T-cell (primary cell): ENCODE measurements at regions of chr19 and their contacts with region 1.

Region 1: DNA sequence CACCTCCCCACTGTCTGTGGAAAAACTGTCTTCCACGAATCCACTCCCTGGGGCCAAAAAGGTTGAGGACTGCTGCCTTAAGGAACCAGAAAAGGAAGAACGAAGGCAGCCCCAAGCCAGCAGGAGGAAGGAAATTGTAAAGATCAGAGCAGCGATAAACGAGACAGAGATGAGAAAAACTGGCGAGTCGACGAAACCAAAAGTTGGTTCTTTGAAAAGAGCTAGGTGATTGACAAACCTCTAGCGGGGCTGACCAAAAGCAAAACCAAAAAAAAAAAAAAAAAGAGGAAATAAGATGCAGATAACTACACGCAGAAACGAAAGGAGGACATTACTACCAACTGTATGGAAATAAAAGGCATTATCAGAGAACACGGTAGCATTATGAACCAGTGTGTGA is 76.9 kb downstream of the GADD45B start:
- DNase-seq: peak in 32 of 35 experiments; percentile 19 to 84 (median 44)
- ATAC-seq: peak; percentile 89 to 94 (median 91)
- H3K4me3 ChIP-seq: peak overlapping the region; percentile 29 to 37
- H3K4me3 Mint-ChIP-seq: peak overlapping the region; percentile 68 to 85 (median 73)
- H3K27ac ChIP-seq: peak overlapping the region; percentile 67
- H3K27ac Mint-ChIP-seq: peak overlapping the region; percentile 86 to 90
- H3K4me1 ChIP-seq: peaks cover 2 to 18% of the 10 kb centered on the region in 2 experiments
- H3K4me1 Mint-ChIP-seq: peaks cover 20 to 32% (median 21%) of the 10 kb centered on the region in 3 donors
- H3K27me3 ChIP-seq: no peaks in the 10 kb centered on the region
- H3K27me3 Mint-ChIP-seq: no peaks in the 10 kb centered on the region

Region 2: GRCh38 chr19:2610637-2611482 is 58.0 kb after region 1 on chr19:
- CTCF ChIA-PET with region 1: interaction called in 1 of 2 experiments, 10 read pairs
- POLR2A ChIA-PET with region 1: no interaction called
- DNase-seq: peak; percentile 49 to 93 (median 82)
- ATAC-seq: peak; percentile 63 to 76 (median 74)
- H3K4me3 ChIP-seq: peak overlapping the region; percentile 45 to 72
- H3K4me3 Mint-ChIP-seq: peak overlapping the region; percentile 72 to 80 (median 77)
- H3K27ac ChIP-seq: no peak overlapping the region
- H3K27ac Mint-ChIP-seq: peak overlapping the region in 1 of 2 donors; percentile 46
- H3K4me1 ChIP-seq: peaks cover 11 to 42% of the 10 kb centered on the region in 2 experiments
- H3K4me1 Mint-ChIP-seq: peaks cover 39 to 44% (median 40%) of the 10 kb centered on the region in 3 donors
- H3K27me3 ChIP-seq: peaks cover 0 to 9% of the 10 kb centered on the region in 2 experiments
- H3K27me3 Mint-ChIP-seq: peaks cover 0 to 3% of the 10 kb centered on the region in 2 donors

Region 3: GRCh38 chr19:2702162-2703076 is 149.6 kb after region 1 on chr19 and contains the start of gene GNG7:
- CTCF ChIA-PET with region 1: no interaction called
- POLR2A ChIA-PET with region 1: no interaction called
- DNase-seq: peak; percentile 86 to 99 (median 93)
- ATAC-seq: peak; percentile 99 to 100 (median 100)
- H3K4me3 ChIP-seq: peak within 1 kb of the TSS; percentile 6 to 45
- H3K4me3 Mint-ChIP-seq: peak within 1 kb of the TSS; percentile 67 to 78 (median 75)
- H3K27ac ChIP-seq: no peak within 1 kb of the TSS
- H3K27ac Mint-ChIP-seq: peak within 1 kb of the TSS in 1 of 2 donors; percentile 82
- H3K4me1 ChIP-seq: peaks cover 6 to 26% of the 10 kb centered on the region in 2 experiments
- H3K4me1 Mint-ChIP-seq: peaks cover 31 to 36% (median 35%) of the 10 kb centered on the region in 3 donors
- H3K27me3 ChIP-seq: peaks cover 0 to 3% of the 10 kb centered on the region in 2 experiments
- H3K27me3 Mint-ChIP-seq: no peaks in the 10 kb centered on the region
- total RNA-seq, gene GNG7: 4.5 to 7.2 (median 5.7) TPM